ENCODE measurements at regions of chr9 and their contacts with region 1.

Region 1: GRCh38 chr9:12511726-12512125 is 181.5 kb upstream of the TYRP1 start:
- DNase-seq: no peak
- ATAC-seq: no peak
- H3K4me3 ChIP-seq: no peak overlapping the region
- H3K4me3 Mint-ChIP-seq: no peak overlapping the region
- H3K27ac ChIP-seq: no peak overlapping the region
- H3K27ac Mint-ChIP-seq: no peak overlapping the region
- H3K4me1 ChIP-seq: no peaks in the 10 kb centered on the region
- H3K4me1 Mint-ChIP-seq: no peaks in the 10 kb centered on the region
- H3K27me3 ChIP-seq: no peaks in the 10 kb centered on the region
- H3K27me3 Mint-ChIP-seq: no peaks in the 10 kb centered on the region
- CTCF ChIP-seq: no peak

Region 2: DNA sequence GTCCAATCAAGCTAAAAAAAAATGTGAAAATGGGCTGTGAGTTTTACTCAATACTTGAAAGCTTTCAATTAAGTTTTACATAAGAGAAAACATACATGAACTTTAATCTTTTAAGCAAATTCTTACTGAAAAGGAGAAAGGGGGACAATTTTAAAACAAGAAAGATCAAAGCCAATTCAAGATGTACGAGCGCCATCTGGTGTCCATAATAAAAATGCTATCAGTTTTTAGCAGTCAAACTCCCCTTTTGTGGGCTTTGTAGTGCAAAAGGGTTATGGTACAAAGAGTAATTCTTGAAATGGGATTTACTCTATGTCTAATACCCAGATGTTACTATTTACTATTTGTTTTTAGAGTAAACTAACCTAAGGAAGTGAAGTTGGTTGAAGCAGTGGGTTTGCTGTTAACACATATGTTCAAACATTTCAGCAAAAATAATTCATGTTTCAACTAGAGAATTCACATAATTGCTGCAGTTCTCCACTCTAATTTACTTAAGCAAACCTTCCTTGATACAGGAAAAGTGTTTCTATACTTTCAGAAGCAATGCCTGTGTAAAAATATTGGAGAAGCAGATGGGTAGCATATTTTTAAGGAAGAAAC is 46.7 kb before region 1 on chr9:
- CTCF ChIA-PET with region 1: no interaction called
- POLR2A ChIA-PET with region 1: no interaction called
- intact Hi-C with region 1: loop called in 1 of 2 experiments (anchors 5 kb)
- DNase-seq: no peak
- ATAC-seq: no peak
- H3K4me3 ChIP-seq: no peak overlapping the region
- H3K4me3 Mint-ChIP-seq: no peak overlapping the region
- H3K27ac ChIP-seq: no peak overlapping the region
- H3K27ac Mint-ChIP-seq: no peak overlapping the region
- H3K4me1 ChIP-seq: no peaks in the 10 kb centered on the region
- H3K4me1 Mint-ChIP-seq: no peaks in the 10 kb centered on the region
- H3K27me3 ChIP-seq: no peaks in the 10 kb centered on the region
- H3K27me3 Mint-ChIP-seq: no peaks in the 10 kb centered on the region
- CTCF ChIP-seq: no peak

Region 3: DNA sequence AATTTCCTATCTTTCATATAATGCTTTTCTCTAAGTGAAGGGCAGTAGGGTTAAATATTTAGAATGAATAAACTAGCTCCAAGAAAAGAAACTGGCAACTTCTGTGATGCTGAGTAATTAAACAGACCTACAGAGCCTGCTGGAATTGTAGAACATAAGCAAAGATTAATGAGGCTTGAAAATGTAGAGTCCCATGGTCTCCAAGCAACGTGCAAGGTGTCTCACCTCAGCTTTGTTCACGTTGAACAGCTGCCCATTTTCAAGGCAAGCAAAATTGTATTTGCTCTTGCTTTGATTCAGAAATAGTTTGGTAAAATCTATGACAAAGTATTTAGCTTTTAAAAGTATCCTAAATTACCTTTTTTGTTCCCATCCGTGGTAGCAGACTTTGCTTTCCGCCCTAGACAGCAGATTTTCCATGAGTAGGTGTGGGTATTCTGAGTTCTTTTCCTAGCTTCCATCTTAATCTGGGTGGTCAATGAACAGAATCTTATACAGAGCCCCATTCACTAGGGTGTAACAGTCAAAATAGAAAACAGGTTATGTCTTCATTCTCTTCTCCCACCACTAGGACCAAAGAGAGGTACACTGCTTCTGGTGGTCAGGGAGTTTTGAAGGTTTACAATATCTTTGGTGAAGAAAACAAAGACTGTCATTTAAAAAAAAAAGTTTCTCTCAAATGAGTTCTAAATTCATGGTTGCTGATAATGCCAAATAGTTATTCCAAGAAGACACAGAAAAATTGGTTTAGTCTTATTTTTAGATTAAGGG is 129.3 kb after region 1 on chr9:
- CTCF ChIA-PET with region 1: no interaction called
- POLR2A ChIA-PET with region 1: no interaction called
- intact Hi-C with region 1: no loop called
- DNase-seq: no peak
- ATAC-seq: no peak
- H3K4me3 ChIP-seq: no peak overlapping the region
- H3K4me3 Mint-ChIP-seq: no peak overlapping the region
- H3K27ac ChIP-seq: no peak overlapping the region
- H3K27ac Mint-ChIP-seq: no peak overlapping the region
- H3K4me1 ChIP-seq: no peaks in the 10 kb centered on the region
- H3K4me1 Mint-ChIP-seq: no peaks in the 10 kb centered on the region
- H3K27me3 ChIP-seq: no peaks in the 10 kb centered on the region
- H3K27me3 Mint-ChIP-seq: no peaks in the 10 kb centered on the region
- CTCF ChIP-seq: no peak